ENCODE measurements at regions of chr5 and their contacts with region 1.

Region 1: GRCh38 chr5:155459889-155460500 is 446.4 kb downstream of the KIF4B start:
- DNase-seq: no peak
- H3K4me3 ChIP-seq: no peak overlapping the region
- H3K27ac ChIP-seq: no peak overlapping the region
- H3K4me1 ChIP-seq: no peaks in the 10 kb centered on the region
- H3K27me3 ChIP-seq: no peaks in the 10 kb centered on the region
- CTCF ChIP-seq: no peak
- EP300 ChIP-seq: no peak
- POLR2A ChIP-seq: no peak

Region 2: GRCh38 chr5:155239803-155240202 is 220.2 kb before region 1 on chr5:
- in situ Hi-C with region 1: no loop called
- intact Hi-C with region 1: no loop called
- DNase-seq: no peak
- H3K4me3 ChIP-seq: no peak overlapping the region
- H3K27ac ChIP-seq: no peak overlapping the region
- H3K4me1 ChIP-seq: no peaks in the 10 kb centered on the region
- H3K27me3 ChIP-seq: no peaks in the 10 kb centered on the region
- CTCF ChIP-seq: no peak
- EP300 ChIP-seq: no peak
- POLR2A ChIP-seq: no peak

Region 3: DNA sequence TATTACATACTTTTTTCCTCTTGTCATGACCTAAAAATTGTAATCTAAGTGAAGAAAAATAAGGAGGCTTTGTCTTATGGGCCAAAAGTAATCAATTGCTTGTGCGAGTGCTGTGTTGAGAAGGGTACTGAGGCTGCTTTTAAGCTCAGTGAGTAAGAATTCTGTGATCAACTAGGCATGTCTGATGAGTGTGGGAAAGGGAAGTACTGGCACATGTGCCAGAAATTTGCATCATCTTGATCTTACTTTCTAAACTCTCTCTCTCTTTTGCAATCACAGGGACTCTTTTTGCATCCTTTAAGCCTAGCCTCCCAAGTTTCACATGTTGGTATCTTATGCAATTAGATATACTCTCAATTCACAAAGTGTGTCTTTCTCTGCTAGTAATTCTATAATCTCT is 116.5 kb before region 1 on chr5:
- in situ Hi-C with region 1: no loop called
- intact Hi-C with region 1: no loop called
- DNase-seq: no peak
- H3K4me3 ChIP-seq: no peak overlapping the region
- H3K27ac ChIP-seq: no peak overlapping the region
- H3K4me1 ChIP-seq: no peaks in the 10 kb centered on the region
- H3K27me3 ChIP-seq: no peaks in the 10 kb centered on the region
- CTCF ChIP-seq: no peak
- EP300 ChIP-seq: no peak
- POLR2A ChIP-seq: no peak

Region 4: DNA sequence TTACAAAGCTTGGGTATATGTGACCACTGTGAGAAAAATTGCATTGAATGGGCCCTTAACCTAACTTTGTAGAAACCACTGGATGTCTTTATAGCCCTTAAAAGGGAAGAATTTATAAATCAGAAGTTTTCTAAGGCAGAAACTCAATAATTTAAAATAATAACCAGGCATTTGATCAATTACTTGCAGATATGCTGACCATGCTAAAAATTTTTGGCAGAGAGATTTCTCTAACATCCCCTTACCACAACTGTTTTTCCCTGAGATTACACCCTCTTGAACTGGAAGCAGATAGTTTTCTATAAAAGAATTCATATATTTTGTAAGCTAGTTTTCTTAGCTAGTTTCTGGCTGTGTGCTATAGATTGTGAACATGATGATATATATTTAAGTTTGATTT is 18.1 kb before region 1 on chr5:
- in situ Hi-C with region 1: no loop called
- intact Hi-C with region 1: loop called (anchors 1 kb)
- DNase-seq: no peak
- H3K4me3 ChIP-seq: no peak overlapping the region
- H3K27ac ChIP-seq: no peak overlapping the region
- H3K4me1 ChIP-seq: no peaks in the 10 kb centered on the region
- H3K27me3 ChIP-seq: no peaks in the 10 kb centered on the region
- CTCF ChIP-seq: no peak
- EP300 ChIP-seq: no peak
- POLR2A ChIP-seq: no peak